ENCODE measurements at regions of chr14 and their contacts with region 1.

Region 1: DNA sequence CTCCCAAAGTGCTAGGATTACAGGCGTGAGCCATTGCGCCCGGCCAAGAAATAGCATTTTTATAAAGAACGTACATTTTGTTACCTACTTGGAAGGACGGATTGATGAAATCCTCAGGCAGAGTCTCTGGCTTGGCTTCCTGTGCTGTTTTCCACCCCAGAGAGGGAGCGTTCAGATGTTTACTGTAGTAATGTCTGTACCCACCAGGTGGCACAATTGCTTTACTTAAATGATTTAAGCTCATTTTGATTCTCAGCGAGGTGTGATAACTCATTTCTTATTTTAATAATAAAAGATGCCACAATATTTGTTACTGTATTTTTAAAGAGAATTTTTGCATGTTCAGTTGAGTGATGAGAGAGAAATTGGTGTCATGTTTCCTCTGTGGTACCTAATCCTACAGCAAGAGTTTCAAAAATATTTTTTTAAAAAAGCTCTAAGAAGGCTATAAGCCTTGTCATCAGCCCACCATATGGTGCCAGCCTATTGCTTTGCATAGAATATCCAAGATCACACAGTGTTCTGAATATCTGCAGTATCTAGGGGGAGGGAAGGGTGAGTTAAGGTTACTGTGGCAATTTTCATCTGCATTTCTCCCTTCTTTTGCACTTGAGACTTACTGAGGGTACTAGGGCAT is 82.6 kb upstream of the TRAF3 start:
- DNase-seq: no peak
- ATAC-seq: peak; percentile 82
- H3K4me3 ChIP-seq: no peak overlapping the region
- H3K27ac ChIP-seq: no peak overlapping the region
- H3K4me1 ChIP-seq: peaks cover 1 to 3% of the 10 kb centered on the region in 2 donors
- H3K27me3 ChIP-seq: no peaks in the 10 kb centered on the region

Region 2: DNA sequence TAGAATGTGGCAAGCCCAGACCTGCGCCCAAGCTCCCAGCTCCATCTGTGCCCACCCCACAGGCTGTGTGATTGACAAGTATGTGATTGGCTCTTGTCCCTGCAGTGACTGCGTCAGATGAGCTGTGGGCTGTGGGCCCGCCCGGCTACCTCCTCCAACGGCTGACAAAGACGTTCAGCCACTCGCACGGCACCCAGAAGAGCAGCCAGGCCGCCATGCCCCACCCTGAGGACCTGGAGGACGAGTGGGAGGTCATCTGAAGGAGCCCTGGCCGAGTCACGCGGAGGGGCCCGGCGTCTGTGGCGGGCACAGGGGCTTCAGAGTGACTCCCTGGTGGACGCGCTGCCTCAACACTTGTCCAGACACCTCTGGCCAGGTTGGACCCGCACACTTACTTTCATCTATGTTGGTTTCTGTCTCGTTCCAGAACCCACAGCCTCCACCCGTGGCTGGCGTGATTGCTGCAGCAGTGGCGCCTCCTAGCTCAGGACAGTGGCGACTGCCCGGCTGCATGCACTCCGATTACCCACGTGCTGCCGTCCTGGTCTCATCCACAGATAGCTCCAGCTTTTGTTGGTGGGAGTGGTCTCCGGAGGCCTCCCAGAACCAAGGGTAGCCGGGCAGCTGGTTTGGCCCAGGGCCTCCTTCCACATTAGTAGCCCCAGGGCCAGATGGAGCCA is 196.5 kb before region 1 on chr14:
- intact Hi-C with region 1: no loop called
- DNase-seq: no peak
- ATAC-seq: no peak
- H3K4me3 ChIP-seq: no peak overlapping the region
- H3K27ac ChIP-seq: no peak overlapping the region
- H3K4me1 ChIP-seq: no peaks in the 10 kb centered on the region
- H3K27me3 ChIP-seq: no peaks in the 10 kb centered on the region

Region 3: GRCh38 chr14:102917469-102918211 is 223.0 kb after region 1 on chr14:
- intact Hi-C with region 1: loop called (anchors 2 to 10 kb)
- DNase-seq: peak; percentile 69 to 87
- ATAC-seq: no peak
- H3K4me3 ChIP-seq: no peak overlapping the region
- H3K27ac ChIP-seq: no peak overlapping the region
- H3K4me1 ChIP-seq: no peaks in the 10 kb centered on the region
- H3K27me3 ChIP-seq: no peaks in the 10 kb centered on the region

Region 4: GRCh38 chr14:102951034-102951433 is 256.4 kb after region 1 on chr14:
- intact Hi-C with region 1: no loop called
- DNase-seq: no peak
- ATAC-seq: no peak
- H3K4me3 ChIP-seq: no peak overlapping the region
- H3K27ac ChIP-seq: no peak overlapping the region
- H3K4me1 ChIP-seq: no peaks in the 10 kb centered on the region
- H3K27me3 ChIP-seq: no peaks in the 10 kb centered on the region

Region 5: DNA sequence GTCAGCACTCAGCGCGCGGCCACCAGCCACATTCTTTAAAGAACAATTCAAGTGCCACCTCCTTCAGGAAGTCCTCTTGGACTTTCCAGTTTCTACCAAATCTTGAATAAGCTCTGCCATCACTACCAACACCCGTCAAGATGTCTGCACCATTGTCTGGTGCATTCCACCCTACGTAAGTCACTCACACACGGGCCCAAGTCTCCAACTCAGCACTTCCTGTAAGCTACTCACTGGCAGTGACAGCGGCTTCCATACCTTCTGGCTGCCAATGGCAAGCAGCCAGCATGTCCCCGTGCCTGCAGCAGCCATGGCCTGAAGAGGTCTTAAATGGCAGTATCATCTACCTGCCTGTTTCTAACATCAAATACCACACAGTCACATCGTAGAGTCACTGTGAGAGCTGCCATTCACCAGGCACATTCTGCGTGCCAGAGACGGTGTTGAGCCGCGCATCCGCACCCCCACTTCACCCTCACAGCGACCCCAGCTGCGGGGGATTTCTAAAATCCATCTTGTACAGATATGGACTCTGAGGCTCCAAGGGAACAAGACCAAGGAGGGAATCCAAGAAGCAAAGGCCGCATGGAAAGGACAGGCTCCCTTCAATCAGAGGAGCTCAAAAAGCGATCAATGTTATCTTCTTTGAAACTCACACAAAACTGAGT is 314.4 kb after region 1 on chr14:
- intact Hi-C with region 1: no loop called
- DNase-seq: peak in 1 of 2 donors; percentile 75
- ATAC-seq: no peak
- H3K4me3 ChIP-seq: no peak overlapping the region
- H3K27ac ChIP-seq: no peak overlapping the region
- H3K4me1 ChIP-seq: no peaks in the 10 kb centered on the region
- H3K27me3 ChIP-seq: no peaks in the 10 kb centered on the region

Measured in aorta (tissue), 5 donors.